ENCODE measurements at regions of chr4 and their contacts with region 1.

Region 1: GRCh38 chr4:174217273-174218126 is 66.0 kb downstream of the FBXO8 start:
- DNase-seq: peak; percentile 66
- ATAC-seq: peak; percentile 72

Region 2: DNA sequence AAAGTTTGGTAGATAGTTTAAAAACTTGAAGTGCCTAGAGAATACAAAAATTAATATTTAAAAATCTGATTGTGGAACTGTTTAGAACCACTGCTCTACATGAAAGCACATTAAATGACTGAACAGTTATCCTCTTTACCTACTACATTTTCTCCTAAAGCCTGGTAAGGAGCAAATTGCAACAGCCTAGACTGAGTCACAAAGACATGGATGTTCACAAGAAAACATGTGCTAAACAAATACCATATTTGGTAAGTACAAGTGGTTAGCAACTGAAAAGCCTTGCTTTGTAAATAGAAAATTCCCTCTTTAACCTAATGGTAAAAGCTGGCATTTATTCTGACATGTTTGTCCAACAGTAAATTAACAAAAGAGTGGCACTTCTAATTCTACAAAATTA is 137.1 kb before region 1 on chr4:
- intact Hi-C with region 1: no loop called
- DNase-seq: no peak
- ATAC-seq: no peak

Region 3: DNA sequence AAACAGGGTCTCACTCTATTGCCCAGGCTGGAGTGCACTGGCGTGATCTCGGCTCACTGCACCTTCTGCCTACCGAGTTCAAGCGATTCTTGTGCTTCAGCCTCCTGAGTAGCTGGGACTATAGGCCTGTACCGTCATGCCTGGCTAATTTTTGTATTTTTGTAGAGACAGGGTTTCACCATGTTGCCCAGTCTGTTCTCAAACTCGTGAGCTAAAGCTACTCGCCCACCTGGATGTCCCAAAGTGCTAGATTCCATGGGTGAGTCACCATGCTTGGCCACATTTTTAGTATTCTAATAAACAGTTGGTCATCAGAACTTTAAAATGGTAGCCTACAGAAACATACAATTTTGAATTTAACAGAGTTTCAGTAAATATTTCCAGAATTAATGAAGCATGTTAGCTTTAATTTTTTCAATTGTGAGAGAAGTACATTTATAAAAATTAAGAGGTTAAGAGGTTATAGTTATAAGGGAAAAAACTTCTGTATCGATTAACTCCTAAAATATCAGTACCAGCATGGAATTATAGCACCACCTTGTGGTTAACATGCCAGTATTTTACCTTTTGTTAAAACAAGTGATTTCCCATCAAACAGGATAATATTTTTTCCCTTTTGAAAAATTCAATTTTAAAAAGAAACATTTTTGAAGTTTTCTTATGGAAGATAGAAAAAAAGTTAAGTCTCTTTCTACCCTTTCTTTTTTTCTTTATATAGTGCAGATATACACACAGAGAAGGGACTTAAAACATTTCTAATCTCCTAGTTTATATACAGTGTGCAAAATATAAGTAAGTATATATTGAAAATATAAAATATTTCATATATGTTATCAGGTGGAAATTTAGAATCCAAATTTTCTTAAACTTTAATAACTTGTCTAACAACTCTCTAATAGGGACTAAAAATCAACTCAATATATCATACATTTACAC is 101.6 kb after region 1 on chr4:
- intact Hi-C with region 1: loop called (anchors 5 kb)
- DNase-seq: no peak
- ATAC-seq: no peak